ENCODE measurements at regions of chr3 and their contacts with region 1.

Region 1: GRCh38 chr3:185498503-185499396 is at the start of gene TMEM41A:
- DNase-seq: peak; percentile 95
- H3K4me3 ChIP-seq: peak within 1 kb of the TSS; percentile 69 to 88 (median 85)
- H3K27ac ChIP-seq: peak within 1 kb of the TSS; percentile 86 to 95 (median 90)
- H3K4me1 ChIP-seq: peaks cover 0 to 22% (median 18%) of the 10 kb centered on the region in 4 donors
- H3K27me3 ChIP-seq: no peaks in the 10 kb centered on the region
- CTCF ChIP-seq: no peak
- EP300 ChIP-seq: no peak
- POLR2A ChIP-seq: peak; percentile 42 to 75
- total RNA-seq, gene TMEM41A: 8.2 to 10.0 (median 9.1) TPM

Region 2: DNA sequence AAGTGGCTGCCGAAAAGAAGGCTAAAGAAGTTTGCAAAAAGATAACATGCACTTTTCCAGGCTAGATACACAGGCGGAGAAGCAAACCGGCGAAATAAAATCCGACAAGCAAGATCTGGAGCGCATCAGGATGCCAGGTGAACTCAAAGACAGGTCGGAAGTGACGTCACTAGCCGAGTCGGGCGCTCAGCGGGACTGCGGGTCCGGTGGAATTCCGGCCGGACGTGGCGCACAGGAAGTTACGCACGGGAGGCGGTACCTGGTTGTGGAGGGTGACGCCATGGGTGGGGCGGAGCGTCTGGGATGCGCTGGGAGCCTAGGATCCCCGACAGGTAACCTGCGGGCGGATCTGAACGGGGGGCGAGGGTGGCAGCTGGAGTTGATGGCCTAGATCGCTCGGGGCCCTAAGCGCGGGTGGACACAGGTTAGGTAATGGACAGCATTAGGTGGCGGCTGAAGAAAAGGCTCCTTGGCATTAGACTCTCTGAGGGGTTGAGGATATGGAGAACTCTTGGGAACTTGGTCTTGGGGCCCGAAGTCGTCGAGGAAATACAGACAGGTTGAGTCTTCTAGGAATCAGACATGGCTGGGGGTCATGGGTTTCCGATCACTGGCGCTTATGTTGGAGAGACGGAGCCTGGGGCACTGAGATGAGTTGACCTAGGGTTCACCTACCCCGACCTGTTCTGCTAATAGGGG is 215.9 kb before region 1 on chr3:
- intact Hi-C with region 1: loop called (anchors 2 kb)
- DNase-seq: peak; percentile 98
- H3K4me3 ChIP-seq: peak overlapping the region; percentile 54 to 76 (median 68)
- H3K27ac ChIP-seq: peak overlapping the region; percentile 50 to 69 (median 60)
- H3K4me1 ChIP-seq: peaks cover 0 to 14% (median 7%) of the 10 kb centered on the region in 4 donors
- H3K27me3 ChIP-seq: no peaks in the 10 kb centered on the region
- CTCF ChIP-seq: no peak
- EP300 ChIP-seq: peak in 1 of 4 donors; percentile 66
- POLR2A ChIP-seq: peak; percentile 54 to 55

Region 3: DNA sequence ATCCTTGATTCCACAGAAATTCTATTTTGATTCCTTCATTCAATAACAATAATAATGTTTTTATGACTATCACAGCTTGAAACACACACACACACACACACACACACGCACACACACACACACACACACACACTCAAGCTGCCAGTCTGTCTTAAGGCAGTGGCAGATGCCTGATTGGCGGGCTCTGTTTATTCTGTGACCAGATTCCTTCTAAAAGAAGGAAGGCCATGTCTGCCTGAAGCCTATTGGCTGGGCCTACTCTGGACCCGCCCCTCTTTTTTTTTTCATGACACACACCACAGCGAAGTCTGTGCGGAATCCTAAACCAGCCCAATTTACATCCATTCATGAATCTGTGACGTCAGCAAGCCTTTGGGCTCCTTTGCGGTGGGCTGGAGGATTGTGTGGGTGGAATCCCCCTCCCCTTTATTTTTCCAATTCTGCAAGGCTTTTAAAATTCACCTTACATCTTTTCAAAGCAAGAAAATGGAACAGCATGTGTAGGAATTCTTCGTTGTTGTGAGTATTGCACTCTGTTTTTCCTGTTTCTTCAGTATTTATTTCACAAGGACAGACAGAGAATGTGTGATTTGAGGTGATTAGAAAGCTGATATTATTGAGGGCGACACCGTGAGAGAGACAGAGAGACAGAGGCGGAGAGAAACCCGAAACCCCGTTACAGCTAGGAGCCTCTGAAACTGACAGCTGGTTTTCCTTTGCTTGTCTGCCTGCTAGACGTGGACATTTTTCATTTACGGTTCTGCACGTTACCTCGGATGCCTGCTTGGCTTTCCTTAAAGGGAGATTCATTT is 135.7 kb before region 1 on chr3 and contains the start of gene MAP3K13:
- intact Hi-C with region 1: loop called (anchors 5 kb)
- DNase-seq: peak; percentile 93
- H3K4me3 ChIP-seq: peak within 1 kb of the TSS; percentile 47 to 62 (median 55)
- H3K27ac ChIP-seq: peak within 1 kb of the TSS; percentile 74 to 80 (median 78)
- H3K4me1 ChIP-seq: peaks cover 0 to 27% (median 7%) of the 10 kb centered on the region in 4 donors
- H3K27me3 ChIP-seq: no peaks in the 10 kb centered on the region
- CTCF ChIP-seq: no peak
- EP300 ChIP-seq: no peak
- POLR2A ChIP-seq: no peak
- total RNA-seq, gene MAP3K13: 24.5 to 26.9 (median 25.9) TPM

Region 4: GRCh38 chr3:185473290-185473815 is 25.4 kb before region 1 on chr3:
- intact Hi-C with region 1: no loop called
- DNase-seq: no peak
- H3K4me3 ChIP-seq: no peak overlapping the region
- H3K27ac ChIP-seq: no peak overlapping the region
- H3K4me1 ChIP-seq: no peaks in the 10 kb centered on the region
- H3K27me3 ChIP-seq: no peaks in the 10 kb centered on the region
- CTCF ChIP-seq: no peak
- EP300 ChIP-seq: no peak
- POLR2A ChIP-seq: no peak

Region 5: DNA sequence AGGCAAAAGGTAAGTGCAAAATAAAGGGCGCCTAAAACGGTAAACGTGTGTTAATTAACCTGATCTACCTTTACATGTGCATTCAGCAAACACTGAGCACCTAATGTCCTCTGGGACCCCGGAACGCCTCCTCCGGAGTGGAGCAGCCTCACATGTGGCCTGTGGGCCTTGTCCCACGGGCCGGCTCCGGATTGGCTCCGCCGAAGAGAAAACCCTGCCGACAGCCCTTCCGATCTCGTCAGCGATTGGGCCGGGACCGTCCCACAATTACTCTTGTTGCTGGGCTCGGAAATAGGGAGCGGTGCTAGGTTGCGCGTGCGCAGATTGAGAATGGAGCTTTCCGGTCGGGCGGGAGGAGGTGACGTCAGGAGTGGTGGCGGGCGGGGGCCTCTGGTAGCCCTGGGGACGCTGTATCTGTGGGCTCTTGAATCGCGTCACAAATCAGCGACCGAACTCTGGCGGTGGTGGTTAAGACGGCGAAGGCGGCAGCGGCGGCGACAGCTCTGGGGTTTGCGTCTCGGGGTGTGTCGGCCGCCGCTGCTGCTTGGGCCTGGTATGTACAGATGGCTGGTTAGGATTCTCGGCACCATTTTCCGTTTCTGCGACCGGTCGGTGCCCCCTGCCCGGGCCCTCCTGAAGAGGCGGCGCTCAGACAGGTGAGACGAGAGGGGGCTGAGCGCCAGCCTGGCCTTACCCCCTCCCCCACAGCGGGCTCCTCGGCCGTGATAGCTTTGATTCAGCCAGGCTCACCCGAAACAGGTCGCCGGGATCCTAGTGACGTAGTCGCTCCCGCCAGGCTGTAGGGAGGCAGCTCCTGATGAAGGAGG is 87.3 kb after region 1 on chr3 and contains the start of gene SENP2:
- intact Hi-C with region 1: loop called (anchors 2 kb)
- DNase-seq: peak; percentile 99
- H3K4me3 ChIP-seq: peak within 1 kb of the TSS; percentile 80 to 85 (median 82)
- H3K27ac ChIP-seq: peak within 1 kb of the TSS; percentile 94 to 96 (median 96)
- H3K4me1 ChIP-seq: peaks cover 0 to 36% (median 26%) of the 10 kb centered on the region in 4 donors
- H3K27me3 ChIP-seq: no peaks in the 10 kb centered on the region
- CTCF ChIP-seq: no peak
- EP300 ChIP-seq: no peak
- POLR2A ChIP-seq: peak; percentile 83 to 86
- total RNA-seq, gene SENP2: 24.8 to 28.5 (median 26.7) TPM

Region 6: DNA sequence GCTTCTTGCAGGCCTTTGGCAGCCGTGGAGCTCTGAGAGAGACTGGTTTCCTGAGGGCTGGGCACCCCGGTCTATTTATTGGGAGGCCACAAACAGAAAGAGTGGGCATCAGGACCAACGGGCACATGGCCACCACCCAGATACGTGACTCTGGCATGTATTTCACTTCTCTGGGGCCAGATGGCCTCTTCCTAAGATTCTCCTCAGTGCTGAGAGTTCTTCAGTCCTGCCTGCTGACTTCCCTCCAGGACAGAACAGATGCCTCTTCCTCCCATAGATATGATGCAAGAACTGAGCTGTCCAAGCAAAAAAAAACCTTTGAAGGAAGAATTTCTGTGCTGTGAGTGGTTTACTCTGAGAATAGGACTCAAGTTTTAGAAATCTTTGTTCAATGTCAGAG is 218.4 kb after region 1 on chr3:
- intact Hi-C with region 1: no loop called
- DNase-seq: no peak
- H3K4me3 ChIP-seq: no peak overlapping the region
- H3K27ac ChIP-seq: no peak overlapping the region
- H3K4me1 ChIP-seq: no peaks in the 10 kb centered on the region
- H3K27me3 ChIP-seq: no peaks in the 10 kb centered on the region
- CTCF ChIP-seq: no peak
- EP300 ChIP-seq: no peak
- POLR2A ChIP-seq: no peak

Measured in sigmoid colon (tissue), 7 donors.